ENCODE measurements at regions of chr17 and their contacts with region 1.

Region 1: DNA sequence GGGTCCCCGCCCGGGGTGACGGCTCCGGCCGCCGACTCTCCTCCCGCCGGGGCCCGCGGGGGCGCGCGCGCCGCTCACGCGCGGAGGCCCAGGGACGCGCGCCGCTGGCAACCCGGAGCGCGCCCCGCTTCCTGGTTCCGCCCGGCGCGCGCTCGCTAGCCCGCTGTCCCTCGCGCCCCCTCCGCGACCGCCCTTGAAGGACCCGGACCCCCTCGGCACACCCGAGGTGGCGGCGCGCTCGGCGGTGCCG is at the start of gene STAT5B:
- DNase-seq: peak; percentile 30 to 89 (median 66)
- ATAC-seq: peak; percentile 33
- H3K4me3 ChIP-seq: peak within 1 kb of the TSS; percentile 72 to 84
- H3K4me3 Mint-ChIP-seq: peak within 1 kb of the TSS; percentile 96
- H3K27ac ChIP-seq: peak within 1 kb of the TSS; percentile 77 to 83
- H3K27ac Mint-ChIP-seq: peak within 1 kb of the TSS; percentile 98
- H3K4me1 ChIP-seq: peaks cover 48% of the 10 kb centered on the region
- H3K4me1 Mint-ChIP-seq: peaks cover 52% of the 10 kb centered on the region
- H3K27me3 ChIP-seq: no peaks in the 10 kb centered on the region
- H3K27me3 Mint-ChIP-seq: no peaks in the 10 kb centered on the region
- CTCF ChIP-seq: no peak
- total RNA-seq, gene STAT5B: 85.2 to 85.5 TPM

Region 2: DNA sequence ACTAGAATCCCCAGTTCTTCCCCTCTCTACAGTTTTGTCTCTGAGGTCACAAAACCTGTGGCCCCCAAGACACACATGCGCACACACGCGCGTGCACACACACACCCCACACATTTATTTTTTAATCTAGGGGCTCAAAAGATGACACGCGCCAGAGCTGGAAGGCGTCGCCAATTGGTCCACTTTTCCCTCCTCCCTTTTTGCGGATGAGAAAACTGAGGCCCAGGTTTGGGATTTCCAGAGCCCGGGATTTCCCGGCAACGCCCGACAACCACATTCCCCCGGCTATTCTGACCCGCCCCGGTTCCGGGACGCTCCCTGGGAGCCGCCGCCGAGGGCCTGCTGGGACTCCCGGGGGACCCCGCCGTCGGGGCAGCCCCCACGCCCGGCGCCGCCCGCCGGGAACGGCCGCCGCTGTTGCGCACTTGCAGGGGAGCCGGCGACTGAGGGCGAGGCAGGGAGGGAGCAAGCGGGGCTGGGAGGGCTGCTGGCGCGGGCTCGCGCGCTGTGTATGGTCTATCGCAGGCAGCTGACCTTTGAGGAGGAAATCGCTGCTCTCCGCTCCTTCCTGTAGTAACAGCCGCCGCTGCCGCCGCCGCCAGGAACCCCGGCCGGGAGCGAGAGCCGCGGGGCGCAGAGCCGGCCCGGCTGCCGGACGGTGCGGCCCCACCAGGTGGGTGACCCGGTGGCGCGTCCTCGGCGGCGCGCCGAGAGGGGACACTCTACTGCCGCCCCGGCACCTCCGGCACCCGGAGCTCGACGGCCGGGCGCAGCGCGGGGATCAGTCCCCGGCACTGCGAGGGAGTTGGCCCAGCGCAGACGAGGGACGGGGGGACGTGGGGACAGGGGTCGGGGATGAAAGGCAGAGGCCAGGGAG is 11.9 kb after region 1 on chr17 and contains the start of gene STAT5A:
- CTCF ChIA-PET with region 1: interaction called, 6 read pairs
- POLR2A ChIA-PET with region 1: interaction called, 14 read pairs
- intact Hi-C with region 1: loop called (anchors 1 kb)
- DNase-seq: peak; percentile 63 to 92 (median 81)
- ATAC-seq: peak; percentile 78
- H3K4me3 ChIP-seq: peak within 1 kb of the TSS; percentile 74 to 84
- H3K4me3 Mint-ChIP-seq: peak within 1 kb of the TSS; percentile 94
- H3K27ac ChIP-seq: peak within 1 kb of the TSS; percentile 87 to 94
- H3K27ac Mint-ChIP-seq: peak within 1 kb of the TSS; percentile 98
- H3K4me1 ChIP-seq: peaks cover 35% of the 10 kb centered on the region
- H3K4me1 Mint-ChIP-seq: peaks cover 50% of the 10 kb centered on the region
- H3K27me3 ChIP-seq: no peaks in the 10 kb centered on the region
- H3K27me3 Mint-ChIP-seq: no peaks in the 10 kb centered on the region
- CTCF ChIP-seq: no peak
- total RNA-seq, gene STAT5A: 300 to 319 TPM

Measured in CD8-positive, alpha-beta T cell (primary cell).